ENCODE measurements at regions of chr1 and their contacts with region 1.

Region 1: GRCh38 chr1:179809506-179810366 is 66.6 kb downstream of the FAM163A start:
- DNase-seq: peak; percentile 80
- CTCF ChIP-seq: peak; percentile 84

Region 2: GRCh38 chr1:179081687-179082332 is 727.9 kb before region 1 on chr1 and contains the start of gene TOR3A:
- in situ Hi-C with region 1: loop called (anchors 25 kb)
- DNase-seq: peak; percentile 96
- CTCF ChIP-seq: no peak

Region 3: DNA sequence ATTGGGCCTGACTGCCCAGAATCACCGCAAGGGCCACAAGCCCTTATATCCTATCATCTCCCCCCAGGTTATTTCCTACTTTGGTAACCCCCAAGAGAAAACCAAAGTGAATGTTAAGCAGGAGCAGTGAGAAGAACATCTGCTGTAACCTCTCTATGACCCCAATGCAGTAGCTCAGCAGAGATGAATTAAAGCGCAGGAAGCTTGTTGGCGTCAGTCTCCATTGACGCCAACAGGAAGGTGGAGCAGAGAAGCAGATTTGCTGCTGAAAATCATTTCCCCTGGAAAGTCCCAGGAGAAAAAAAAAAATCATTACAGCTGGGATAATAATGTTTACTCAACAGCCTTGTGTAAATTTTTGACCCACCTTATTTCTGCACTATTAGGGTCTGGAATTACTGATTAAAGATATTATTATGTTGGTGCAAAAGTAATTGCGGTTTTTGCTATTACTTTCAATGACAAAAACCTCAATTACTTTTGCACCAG is 99.9 kb before region 1 on chr1:
- in situ Hi-C with region 1: loop called (anchors 10 kb)
- DNase-seq: no peak
- CTCF ChIP-seq: no peak

Region 4: GRCh38 chr1:180003026-180003695 is 193.4 kb after region 1 on chr1:
- in situ Hi-C with region 1: no loop called
- DNase-seq: peak; percentile 25
- CTCF ChIP-seq: no peak